Activated CD4-positive, alpha-beta T cell treated with anti-CD3 and anti-CD28 coated beads for 36 hours (primary cell): ENCODE measurements at regions of chr14 and their contacts with region 1.

Region 1: GRCh38 chr14:32076278-32077080 is 625 bp upstream of the ARHGAP5 start:
- DNase-seq: peak; percentile 91
- ATAC-seq: peak; percentile 68
- H3K4me3 Mint-ChIP-seq: peak overlapping the region; percentile 94
- H3K27ac Mint-ChIP-seq: peak overlapping the region; percentile 95
- H3K4me1 Mint-ChIP-seq: peaks cover 31% of the 10 kb centered on the region
- H3K27me3 Mint-ChIP-seq: peaks cover 2% of the 10 kb centered on the region

Region 2: DNA sequence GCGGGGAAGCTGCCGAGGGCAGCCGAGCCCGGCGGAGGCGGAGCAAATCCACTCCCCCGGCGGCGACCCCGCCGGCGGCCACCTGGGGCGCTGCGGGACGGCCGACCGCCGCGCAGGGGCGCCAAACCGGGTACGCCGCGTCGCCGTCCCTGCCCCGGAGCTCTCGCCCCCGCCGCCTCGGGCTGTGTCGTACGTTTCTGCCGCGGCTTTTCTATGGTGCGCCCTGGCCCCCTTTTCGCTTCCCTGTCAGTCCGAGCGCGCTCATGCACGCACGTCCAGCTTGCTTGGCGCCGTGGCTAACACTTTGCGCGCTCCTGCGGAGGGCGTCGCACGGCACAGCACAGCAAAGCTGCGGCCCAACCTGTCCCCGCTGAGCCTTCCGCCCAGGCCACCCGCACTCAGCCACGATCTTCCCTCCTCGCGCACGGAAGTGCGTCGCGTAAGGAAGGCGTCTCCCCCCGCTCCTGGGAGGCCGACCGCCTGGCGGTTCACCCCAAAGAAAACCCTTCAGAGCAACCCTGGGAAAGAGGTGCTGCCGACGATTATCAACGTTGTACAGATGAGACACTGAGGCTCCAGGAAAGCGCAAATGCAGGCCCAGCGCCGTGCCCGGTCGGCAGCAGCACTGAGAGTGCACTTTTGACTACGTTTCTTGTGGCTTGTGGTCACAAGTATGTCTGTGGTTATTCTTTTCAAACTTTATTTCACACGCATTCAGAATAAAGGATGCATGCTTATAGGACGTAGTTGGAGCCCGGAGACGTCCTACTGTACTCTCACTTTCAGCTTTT is 868.5 kb before region 1 on chr14 and contains the start of gene HECTD1:
- CTCF ChIA-PET with region 1: no interaction called
- POLR2A ChIA-PET with region 1: no interaction called
- intact Hi-C with region 1: loop called (anchors 1 to 5 kb)
- DNase-seq: peak; percentile 94
- ATAC-seq: peak; percentile 77
- H3K4me3 Mint-ChIP-seq: peak within 1 kb of the TSS; percentile 85
- H3K27ac Mint-ChIP-seq: peak within 1 kb of the TSS; percentile 99
- H3K4me1 Mint-ChIP-seq: peaks cover 38% of the 10 kb centered on the region
- H3K27me3 Mint-ChIP-seq: no peaks in the 10 kb centered on the region
- total RNA-seq, gene HECTD1: 87.1 to 89.5 TPM

Region 3: DNA sequence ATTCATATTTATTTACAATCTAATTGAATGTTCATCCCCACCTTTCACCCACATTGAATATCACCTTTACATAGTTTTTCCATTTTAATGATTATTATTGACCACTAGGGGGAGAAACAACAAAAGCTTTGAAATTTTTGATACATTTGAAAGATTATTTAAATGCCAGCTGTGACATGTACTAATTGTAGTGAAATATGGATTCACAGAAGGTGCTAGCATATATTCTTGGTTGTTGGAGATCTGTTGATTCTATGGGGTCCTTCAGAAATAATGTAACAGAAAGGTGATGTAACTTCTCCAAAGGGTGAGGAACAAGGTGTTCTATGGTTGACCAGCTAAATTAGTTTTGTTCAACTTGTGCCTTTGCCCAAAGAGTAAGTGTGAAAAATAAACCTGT is 566.3 kb before region 1 on chr14:
- CTCF ChIA-PET with region 1: interaction called, 7 read pairs
- POLR2A ChIA-PET with region 1: no interaction called
- intact Hi-C with region 1: loop called (anchors 1 to 5 kb)
- DNase-seq: no peak
- ATAC-seq: no peak
- H3K4me3 Mint-ChIP-seq: no peak overlapping the region
- H3K27ac Mint-ChIP-seq: no peak overlapping the region
- H3K4me1 Mint-ChIP-seq: no peaks in the 10 kb centered on the region
- H3K27me3 Mint-ChIP-seq: no peaks in the 10 kb centered on the region

Region 4: DNA sequence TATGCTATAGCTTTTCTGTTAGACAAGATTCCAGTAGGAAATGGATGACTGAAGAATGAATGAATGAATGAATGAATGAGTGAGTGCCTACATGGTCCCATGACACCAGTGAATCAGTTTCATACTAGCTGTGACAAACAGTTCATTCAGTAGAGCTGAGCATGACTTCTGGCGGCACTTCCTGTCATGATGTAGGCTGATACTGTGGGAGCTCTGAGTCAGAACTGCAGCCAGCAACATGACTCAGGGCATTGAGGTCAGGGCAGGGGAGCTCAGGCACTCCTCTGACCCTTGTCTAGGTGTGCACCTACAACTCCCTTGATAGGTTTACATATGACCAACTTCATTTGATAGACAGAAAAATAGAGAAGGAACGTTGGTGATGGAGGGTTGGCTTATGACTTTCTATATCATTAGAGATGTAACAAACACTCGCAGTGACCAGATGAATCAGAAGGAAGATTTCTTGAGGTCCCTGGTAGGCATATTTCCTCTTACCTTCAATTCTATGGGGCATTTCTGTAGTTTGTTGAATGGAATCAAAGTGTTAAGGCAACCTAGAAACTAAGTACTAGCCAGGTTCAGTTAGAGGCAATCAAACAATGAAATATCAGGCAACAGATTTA is 138.6 kb before region 1 on chr14:
- CTCF ChIA-PET with region 1: interaction called, 3 read pairs
- POLR2A ChIA-PET with region 1: interaction called, 3 read pairs
- intact Hi-C with region 1: loop called (anchors 1 to 5 kb)
- DNase-seq: peak; percentile 87
- ATAC-seq: peak; percentile 100
- H3K4me3 Mint-ChIP-seq: no peak overlapping the region
- H3K27ac Mint-ChIP-seq: peak overlapping the region; percentile 28
- H3K4me1 Mint-ChIP-seq: peaks cover 17% of the 10 kb centered on the region
- H3K27me3 Mint-ChIP-seq: peaks cover 2% of the 10 kb centered on the region

Region 5: GRCh38 chr14:31950764-31951637 is 125.5 kb before region 1 on chr14:
- CTCF ChIA-PET with region 1: no interaction called
- POLR2A ChIA-PET with region 1: no interaction called
- intact Hi-C with region 1: no loop called
- DNase-seq: no peak
- ATAC-seq: no peak
- H3K4me3 Mint-ChIP-seq: no peak overlapping the region
- H3K27ac Mint-ChIP-seq: no peak overlapping the region
- H3K4me1 Mint-ChIP-seq: peaks cover 7% of the 10 kb centered on the region
- H3K27me3 Mint-ChIP-seq: peaks cover 5% of the 10 kb centered on the region

Region 6: DNA sequence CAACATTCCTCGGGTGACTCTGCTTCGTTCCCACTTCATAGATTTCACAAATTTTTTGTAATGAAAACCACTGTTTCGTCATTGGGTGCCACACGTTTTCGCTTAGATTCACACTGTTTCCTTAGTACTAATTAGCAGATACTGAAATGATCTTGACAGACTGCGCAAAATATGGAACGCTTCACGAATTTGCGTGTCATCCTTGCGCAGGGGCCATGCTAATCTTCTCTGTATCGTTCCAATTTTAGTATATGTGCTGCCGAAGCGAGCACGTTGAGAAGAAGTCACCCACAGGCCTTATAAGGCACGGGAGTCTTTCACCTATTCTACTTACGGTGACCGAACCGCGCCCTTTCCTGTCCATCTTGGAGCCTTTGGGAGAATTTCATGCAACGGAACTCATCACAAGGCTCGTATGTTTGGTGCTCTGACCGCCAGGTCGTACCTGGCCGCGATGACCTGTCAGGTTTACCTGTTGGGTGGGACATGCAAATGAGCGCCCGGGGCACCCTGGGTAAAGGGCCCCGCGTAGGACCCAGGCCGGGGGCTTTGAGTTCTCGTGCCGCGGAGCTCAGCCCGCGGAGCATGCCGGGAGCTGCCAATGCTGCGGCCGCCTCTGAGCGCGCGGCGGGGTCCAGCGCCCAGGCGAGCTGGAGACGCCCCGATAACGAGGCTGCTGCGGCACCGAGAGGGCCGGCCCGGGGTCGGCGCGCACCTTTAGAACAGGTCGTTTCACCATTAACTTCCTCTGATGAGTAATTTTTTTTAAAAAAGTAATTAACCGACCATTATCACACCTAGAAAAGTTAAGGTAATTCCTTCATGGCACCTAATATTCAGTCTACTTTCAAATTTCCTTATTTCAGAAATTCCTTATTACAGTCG is 126.8 kb after region 1 on chr14 and contains the start of gene RNU6-8:
- CTCF ChIA-PET with region 1: interaction called, 12 read pairs
- POLR2A ChIA-PET with region 1: interaction called, 8 read pairs
- intact Hi-C with region 1: loop called (anchors 1 kb)
- DNase-seq: peak; percentile 90
- ATAC-seq: peak; percentile 86
- H3K4me3 Mint-ChIP-seq: peak within 1 kb of the TSS; percentile 87
- H3K27ac Mint-ChIP-seq: peak within 1 kb of the TSS; percentile 100
- H3K4me1 Mint-ChIP-seq: peaks cover 48% of the 10 kb centered on the region
- H3K27me3 Mint-ChIP-seq: peaks cover 3% of the 10 kb centered on the region
- total RNA-seq, gene RNU6-8: not detected

Region 7: DNA sequence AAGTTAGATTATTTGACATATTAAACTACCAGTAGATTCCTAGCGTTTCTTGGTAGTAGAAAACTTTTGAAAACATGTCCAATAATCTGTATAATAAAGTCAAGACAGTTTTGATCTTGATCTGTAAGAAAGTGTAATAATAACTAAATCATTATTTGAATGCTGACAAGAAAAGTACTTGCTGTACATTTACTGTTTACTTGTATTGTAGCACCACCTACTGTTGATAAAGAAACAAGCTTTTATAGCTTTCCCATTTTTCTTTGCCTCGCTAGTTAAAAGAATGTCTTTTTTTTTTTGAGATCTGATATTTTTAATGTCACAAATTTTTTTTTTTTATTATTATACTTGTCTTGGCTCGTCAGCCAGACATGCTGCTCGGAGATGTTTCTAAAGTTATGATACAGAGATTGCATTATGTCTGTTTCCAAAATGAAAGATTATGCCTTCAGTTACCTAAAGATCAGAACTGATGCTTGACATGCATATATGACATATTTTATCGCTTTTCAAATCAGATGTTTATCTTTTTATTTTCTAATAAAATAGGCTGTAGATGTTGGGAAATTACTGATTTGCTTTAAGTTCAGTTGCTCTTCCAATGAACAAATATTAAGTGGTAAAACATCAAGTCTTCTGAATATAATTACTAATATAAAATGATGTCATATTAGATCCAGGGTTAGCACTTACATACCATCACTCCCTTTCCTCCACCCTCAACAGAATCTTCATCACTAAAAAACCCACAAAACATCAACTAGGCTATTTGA is 393.1 kb after region 1 on chr14:
- CTCF ChIA-PET with region 1: interaction called, 3 read pairs
- POLR2A ChIA-PET with region 1: no interaction called
- intact Hi-C with region 1: loop called in 1 of 2 experiments (anchors 1 kb)
- DNase-seq: no peak
- ATAC-seq: no peak
- H3K4me3 Mint-ChIP-seq: no peak overlapping the region
- H3K27ac Mint-ChIP-seq: no peak overlapping the region
- H3K4me1 Mint-ChIP-seq: no peaks in the 10 kb centered on the region
- H3K27me3 Mint-ChIP-seq: peaks cover 9% of the 10 kb centered on the region

Region 8: GRCh38 chr14:33175534-33175933 is 1099.1 kb after region 1 on chr14:
- CTCF ChIA-PET with region 1: no interaction called
- POLR2A ChIA-PET with region 1: no interaction called
- intact Hi-C with region 1: no loop called
- DNase-seq: no peak
- ATAC-seq: no peak
- H3K4me3 Mint-ChIP-seq: no peak overlapping the region
- H3K27ac Mint-ChIP-seq: no peak overlapping the region
- H3K4me1 Mint-ChIP-seq: no peaks in the 10 kb centered on the region
- H3K27me3 Mint-ChIP-seq: no peaks in the 10 kb centered on the region